Activated CD4-positive, alpha-beta memory T cell treated with anti-CD3 and anti-CD28 coated beads for 36 hours (primary cell): ENCODE measurements at regions of chr19 and their contacts with region 1.

Region 1: GRCh38 chr19:16382775-16383543 is 58.3 kb downstream of the KLF2 start:
- DNase-seq: peak; percentile 86
- H3K4me3 Mint-ChIP-seq: no peak overlapping the region
- H3K27ac Mint-ChIP-seq: peak overlapping the region; percentile 60
- H3K4me1 Mint-ChIP-seq: peaks cover 41% of the 10 kb centered on the region
- H3K27me3 Mint-ChIP-seq: no peaks in the 10 kb centered on the region

Region 2: GRCh38 chr19:16252459-16253205 is 130.3 kb before region 1 on chr19:
- CTCF ChIA-PET with region 1: interaction called, 143 read pairs
- POLR2A ChIA-PET with region 1: no interaction called
- intact Hi-C with region 1: loop called (anchors 1 kb)
- DNase-seq: no peak
- H3K4me3 Mint-ChIP-seq: no peak overlapping the region
- H3K27ac Mint-ChIP-seq: no peak overlapping the region
- H3K4me1 Mint-ChIP-seq: peaks cover 1% of the 10 kb centered on the region
- H3K27me3 Mint-ChIP-seq: no peaks in the 10 kb centered on the region

Region 3: GRCh38 chr19:16338470-16339360 is 44.2 kb before region 1 on chr19:
- CTCF ChIA-PET with region 1: interaction called, 11 read pairs
- POLR2A ChIA-PET with region 1: interaction called, 3 read pairs
- intact Hi-C with region 1: no loop called
- DNase-seq: peak; percentile 88
- H3K4me3 Mint-ChIP-seq: peak overlapping the region; percentile 42
- H3K27ac Mint-ChIP-seq: peak overlapping the region; percentile 60
- H3K4me1 Mint-ChIP-seq: peaks cover 50% of the 10 kb centered on the region
- H3K27me3 Mint-ChIP-seq: peaks cover 2% of the 10 kb centered on the region

Region 4: GRCh38 chr19:16371540-16371986 is 11.4 kb before region 1 on chr19:
- CTCF ChIA-PET with region 1: interaction called, 20 read pairs
- POLR2A ChIA-PET with region 1: no interaction called
- intact Hi-C with region 1: loop called (anchors 1 kb)
- DNase-seq: peak; percentile 95
- H3K4me3 Mint-ChIP-seq: peak overlapping the region; percentile 53
- H3K27ac Mint-ChIP-seq: peak overlapping the region; percentile 57
- H3K4me1 Mint-ChIP-seq: peaks cover 40% of the 10 kb centered on the region
- H3K27me3 Mint-ChIP-seq: peaks cover 7% of the 10 kb centered on the region

Region 5: GRCh38 chr19:16417660-16418596 is 35.0 kb after region 1 on chr19:
- CTCF ChIA-PET with region 1: interaction called, 10 read pairs
- POLR2A ChIA-PET with region 1: no interaction called
- intact Hi-C with region 1: no loop called
- DNase-seq: peak; percentile 70
- H3K4me3 Mint-ChIP-seq: no peak overlapping the region
- H3K27ac Mint-ChIP-seq: no peak overlapping the region
- H3K4me1 Mint-ChIP-seq: no peaks in the 10 kb centered on the region
- H3K27me3 Mint-ChIP-seq: no peaks in the 10 kb centered on the region

Region 6: DNA sequence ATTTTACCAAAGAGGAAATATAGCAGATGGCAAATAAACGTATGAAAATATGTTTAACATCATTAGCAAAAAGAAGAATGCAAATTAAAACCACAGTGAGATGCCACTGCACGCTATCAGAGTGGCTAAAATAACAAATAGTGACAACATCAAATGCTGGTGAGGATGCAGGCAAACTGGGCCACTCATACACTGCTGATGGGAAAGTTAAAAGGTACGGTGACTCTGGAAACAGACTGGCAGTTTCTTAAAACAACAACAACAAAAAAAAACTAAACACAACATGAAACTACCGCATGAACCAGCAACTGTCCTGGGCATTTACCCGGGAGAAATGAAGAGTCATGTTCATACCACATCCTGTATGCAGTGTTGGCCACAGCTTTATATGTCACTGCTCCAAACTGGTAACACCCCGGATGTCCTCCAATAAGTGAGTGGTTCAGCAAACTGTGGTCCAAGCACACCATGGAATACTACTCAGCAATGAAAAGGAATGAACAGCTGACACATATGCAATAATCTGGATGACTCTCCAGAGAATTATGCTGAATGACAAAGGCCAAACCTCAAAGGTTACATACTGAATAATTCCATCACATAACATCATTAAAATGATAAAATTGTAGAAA is 66.5 kb after region 1 on chr19:
- CTCF ChIA-PET with region 1: no interaction called
- POLR2A ChIA-PET with region 1: no interaction called
- intact Hi-C with region 1: no loop called
- DNase-seq: peak; percentile 60
- H3K4me3 Mint-ChIP-seq: no peak overlapping the region
- H3K27ac Mint-ChIP-seq: peak overlapping the region; percentile 75
- H3K4me1 Mint-ChIP-seq: peaks cover 51% of the 10 kb centered on the region
- H3K27me3 Mint-ChIP-seq: no peaks in the 10 kb centered on the region